CD4-positive, alpha-beta memory T cell (primary cell): ENCODE measurements at regions of chr10 and their contacts with region 1.

Region 1: DNA sequence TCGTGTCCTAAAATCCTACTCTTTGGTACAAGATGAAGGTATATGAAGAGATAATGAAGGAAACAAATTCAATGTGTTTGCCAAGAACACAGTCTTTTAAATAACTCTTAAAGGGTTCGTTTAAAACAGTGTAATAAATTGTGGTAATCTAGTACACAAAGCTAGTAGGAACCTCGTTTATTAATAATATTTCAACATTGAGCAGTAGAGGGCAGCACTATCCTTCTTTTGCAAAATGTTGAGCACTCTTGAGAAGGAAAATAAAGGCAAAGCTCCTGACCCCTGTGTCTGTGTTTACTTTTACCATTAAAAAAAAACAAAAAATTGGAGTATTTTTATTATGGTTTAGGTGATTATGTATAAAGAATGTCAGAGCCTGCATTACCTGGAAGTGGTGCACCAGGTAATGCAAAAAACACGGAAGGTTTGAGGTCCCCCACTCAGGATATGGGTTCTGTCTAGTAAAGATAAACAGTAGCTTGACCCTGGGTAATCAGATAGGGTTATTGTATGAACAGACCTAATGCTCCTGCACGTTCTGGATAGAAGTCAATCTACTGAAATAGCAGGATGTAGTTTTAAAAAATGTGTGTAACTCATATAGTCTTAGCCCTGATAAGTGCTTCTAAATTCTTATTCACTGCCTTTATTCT is 5.7 kb upstream of the GOT1 start:
- DNase-seq: peak in 4 of 5 donors; percentile 27 to 40 (median 39)
- H3K4me3 ChIP-seq: no peak overlapping the region
- H3K4me3 Mint-ChIP-seq: no peak overlapping the region
- H3K27ac ChIP-seq: no peak overlapping the region
- H3K27ac Mint-ChIP-seq: no peak overlapping the region
- H3K4me1 ChIP-seq: peaks cover 10% of the 10 kb centered on the region
- H3K4me1 Mint-ChIP-seq: peaks cover 12 to 24% (median 18%) of the 10 kb centered on the region in 4 donors
- H3K27me3 ChIP-seq: no peaks in the 10 kb centered on the region
- H3K27me3 Mint-ChIP-seq: no peaks in the 10 kb centered on the region

Region 2: DNA sequence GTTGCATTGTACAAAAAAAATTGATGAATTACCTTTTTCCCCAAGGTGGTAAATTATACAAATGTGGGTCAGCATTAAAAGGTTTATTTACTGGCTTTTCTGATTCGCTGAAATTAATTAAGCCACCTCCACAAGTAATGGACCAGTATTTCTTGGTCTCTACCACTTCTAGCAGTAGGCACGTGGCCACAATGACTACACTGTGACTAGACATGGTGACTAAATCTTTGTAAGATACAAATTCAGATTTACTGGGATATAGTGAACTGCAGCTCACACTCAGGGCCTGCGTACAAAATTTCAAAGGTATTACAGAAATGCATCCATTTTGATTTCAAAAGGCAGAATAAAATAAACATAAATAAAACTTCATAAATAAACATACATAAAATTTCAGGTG is 211.3 kb before region 1 on chr10:
- CTCF ChIA-PET with region 1: no interaction called
- POLR2A ChIA-PET with region 1: no interaction called
- intact Hi-C with region 1: no loop called
- DNase-seq: no peak
- H3K4me3 ChIP-seq: no peak overlapping the region
- H3K4me3 Mint-ChIP-seq: no peak overlapping the region
- H3K27ac ChIP-seq: no peak overlapping the region
- H3K27ac Mint-ChIP-seq: no peak overlapping the region
- H3K4me1 ChIP-seq: no peaks in the 10 kb centered on the region
- H3K4me1 Mint-ChIP-seq: no peaks in the 10 kb centered on the region
- H3K27me3 ChIP-seq: no peaks in the 10 kb centered on the region
- H3K27me3 Mint-ChIP-seq: peaks cover 14 to 16% of the 10 kb centered on the region in 2 donors

Region 3: GRCh38 chr10:99395750-99396445 is 40.2 kb before region 1 on chr10:
- CTCF ChIA-PET with region 1: interaction called, 15 read pairs
- POLR2A ChIA-PET with region 1: no interaction called
- intact Hi-C with region 1: loop called (anchors 1 kb)
- DNase-seq: no peak
- H3K4me3 ChIP-seq: no peak overlapping the region
- H3K4me3 Mint-ChIP-seq: no peak overlapping the region
- H3K27ac ChIP-seq: no peak overlapping the region
- H3K27ac Mint-ChIP-seq: peak overlapping the region in 5 of 7 donors; percentile 25 to 79 (median 66)
- H3K4me1 ChIP-seq: no peaks in the 10 kb centered on the region
- H3K4me1 Mint-ChIP-seq: peaks cover 0 to 8% (median 5%) of the 10 kb centered on the region in 4 donors
- H3K27me3 ChIP-seq: no peaks in the 10 kb centered on the region
- H3K27me3 Mint-ChIP-seq: no peaks in the 10 kb centered on the region

Region 4: DNA sequence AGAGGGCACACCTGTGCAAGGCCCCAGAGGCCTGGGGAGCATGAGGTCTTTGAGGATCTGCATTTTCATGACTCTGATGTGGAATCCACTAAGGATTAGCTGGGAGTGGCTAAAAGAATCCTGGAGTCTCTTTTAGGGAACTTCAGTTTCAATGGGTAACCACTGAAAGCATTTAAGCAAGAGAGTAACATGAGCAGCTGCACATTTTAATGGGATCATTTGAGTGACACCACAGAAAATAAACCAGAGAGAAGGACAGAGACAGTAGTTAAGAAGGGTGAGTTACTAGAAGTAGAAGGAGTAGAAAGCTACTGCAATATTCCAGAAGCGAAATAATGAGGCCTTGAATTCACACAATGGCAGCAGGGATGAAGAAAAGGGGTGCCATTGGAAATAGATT is 10.9 kb before region 1 on chr10:
- CTCF ChIA-PET with region 1: interaction called, 21 read pairs
- POLR2A ChIA-PET with region 1: no interaction called
- intact Hi-C with region 1: no loop called
- DNase-seq: no peak
- H3K4me3 ChIP-seq: no peak overlapping the region
- H3K4me3 Mint-ChIP-seq: no peak overlapping the region
- H3K27ac ChIP-seq: no peak overlapping the region
- H3K27ac Mint-ChIP-seq: no peak overlapping the region
- H3K4me1 ChIP-seq: peaks cover 11% of the 10 kb centered on the region
- H3K4me1 Mint-ChIP-seq: peaks cover 11 to 16% (median 13%) of the 10 kb centered on the region in 4 donors
- H3K27me3 ChIP-seq: no peaks in the 10 kb centered on the region
- H3K27me3 Mint-ChIP-seq: no peaks in the 10 kb centered on the region

Region 5: DNA sequence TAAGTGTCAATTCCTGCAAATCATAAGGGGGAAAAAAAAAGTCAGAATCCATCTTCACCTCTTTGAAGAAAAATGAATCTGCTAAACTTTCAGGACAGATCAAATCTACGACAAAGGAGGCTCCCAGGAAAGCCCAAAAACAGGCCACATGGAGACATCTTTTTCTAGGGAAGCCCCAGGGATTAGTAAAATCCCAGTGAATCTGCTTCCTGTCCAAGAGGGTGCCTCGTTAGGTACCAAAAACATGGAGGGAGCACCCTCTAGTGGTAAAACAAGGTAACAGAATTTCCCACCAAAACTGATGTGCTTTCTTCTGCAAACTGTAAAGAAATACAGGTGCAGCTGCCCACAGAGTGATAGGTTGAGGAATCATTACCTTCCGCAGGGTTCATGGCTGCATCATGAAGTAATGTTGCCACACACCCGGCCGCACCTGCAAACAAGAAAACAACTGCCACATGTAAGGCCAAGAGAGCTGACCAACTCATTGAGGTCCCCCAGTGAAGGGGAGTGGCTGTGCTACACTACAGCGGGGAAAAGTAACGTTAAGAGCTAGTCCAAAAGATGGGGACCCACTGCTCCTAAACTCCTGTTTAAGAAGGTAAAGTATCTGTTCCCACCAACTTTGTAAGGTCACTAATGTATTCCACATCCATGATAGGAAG is 176.2 kb after region 1 on chr10:
- CTCF ChIA-PET with region 1: interaction called, 44 read pairs
- POLR2A ChIA-PET with region 1: interaction called, 5 read pairs
- intact Hi-C with region 1: loop called (anchors 1 kb)
- DNase-seq: peak; percentile 46 to 61 (median 51)
- H3K4me3 ChIP-seq: no peak overlapping the region
- H3K4me3 Mint-ChIP-seq: peak overlapping the region in 1 of 8 donors; percentile 53
- H3K27ac ChIP-seq: no peak overlapping the region
- H3K27ac Mint-ChIP-seq: peak overlapping the region; percentile 24 to 85 (median 62)
- H3K4me1 ChIP-seq: peaks cover 18% of the 10 kb centered on the region
- H3K4me1 Mint-ChIP-seq: peaks cover 16 to 32% (median 26%) of the 10 kb centered on the region in 4 donors
- H3K27me3 ChIP-seq: no peaks in the 10 kb centered on the region
- H3K27me3 Mint-ChIP-seq: no peaks in the 10 kb centered on the region

Region 6: DNA sequence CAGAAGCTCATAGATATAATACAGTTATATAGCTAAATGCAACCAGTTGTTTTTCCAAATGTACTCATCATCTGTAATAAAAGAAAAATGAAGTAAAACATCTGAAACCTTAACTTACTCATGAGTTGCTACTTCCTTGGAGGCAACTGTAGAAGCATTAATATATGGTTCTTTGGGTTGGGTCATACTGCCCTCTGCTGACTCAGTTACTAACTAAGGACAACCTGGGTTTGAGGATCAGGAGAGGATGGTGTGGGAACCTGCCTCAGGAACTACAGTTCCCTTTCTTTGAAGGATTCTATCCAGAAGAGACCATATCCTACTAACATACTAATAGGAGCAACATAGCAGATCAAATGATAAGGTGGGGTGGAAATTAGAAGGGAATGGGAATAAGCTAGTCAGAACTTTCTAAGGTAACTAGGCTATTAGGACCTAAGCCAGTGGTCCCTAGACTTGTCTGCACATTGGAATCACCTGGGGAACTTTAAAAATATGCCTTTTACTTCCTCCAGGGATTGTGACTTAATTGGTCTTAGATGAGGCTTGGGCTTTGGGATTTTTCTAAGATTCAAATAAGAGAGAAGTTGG is 275.1 kb after region 1 on chr10:
- CTCF ChIA-PET with region 1: interaction called, 15 read pairs
- POLR2A ChIA-PET with region 1: interaction called, 3 read pairs
- intact Hi-C with region 1: loop called (anchors 1 kb)
- DNase-seq: peak; percentile 24 to 34 (median 33)
- H3K4me3 ChIP-seq: no peak overlapping the region
- H3K4me3 Mint-ChIP-seq: no peak overlapping the region
- H3K27ac ChIP-seq: no peak overlapping the region
- H3K27ac Mint-ChIP-seq: peak overlapping the region in 2 of 7 donors; percentile 31 to 80
- H3K4me1 ChIP-seq: no peaks in the 10 kb centered on the region
- H3K4me1 Mint-ChIP-seq: peaks cover 0 to 2% (median 0%) of the 10 kb centered on the region in 4 donors
- H3K27me3 ChIP-seq: no peaks in the 10 kb centered on the region
- H3K27me3 Mint-ChIP-seq: no peaks in the 10 kb centered on the region